Cardiac septum (tissue), 1 donor: ENCODE measurements at regions of chr19 and their contacts with region 1.

Region 1: DNA sequence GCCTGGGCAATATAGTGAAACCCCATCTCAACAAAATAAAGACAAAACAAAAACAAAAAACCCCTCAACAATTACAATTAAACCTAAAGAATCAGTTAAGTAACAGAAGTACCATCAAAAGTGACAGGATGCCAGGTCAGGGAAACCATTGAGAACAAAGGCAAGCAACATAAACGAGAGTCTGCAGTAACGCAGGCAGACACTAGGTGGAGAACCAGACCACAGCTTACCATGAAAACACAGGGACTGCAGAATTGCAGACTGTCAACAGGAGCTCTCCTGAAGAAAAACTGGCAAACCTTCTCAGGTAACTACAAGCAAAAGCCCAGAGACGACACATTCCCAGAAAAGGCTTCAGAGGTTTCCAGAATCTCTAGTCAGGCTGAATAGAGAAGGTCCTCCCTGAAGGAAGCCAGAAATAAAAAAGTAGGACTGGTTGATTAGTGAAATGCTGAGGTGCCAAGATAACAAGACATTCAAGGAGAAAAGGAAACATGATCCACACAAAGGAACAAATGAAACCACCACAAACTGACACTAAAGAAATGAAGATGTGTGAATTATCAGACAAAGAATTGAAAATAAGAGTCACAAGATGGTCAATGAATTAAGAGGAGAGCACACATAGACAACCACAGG is 2.2 kb upstream of the ZNF665 start:
- DNase-seq: no peak

Region 2: DNA sequence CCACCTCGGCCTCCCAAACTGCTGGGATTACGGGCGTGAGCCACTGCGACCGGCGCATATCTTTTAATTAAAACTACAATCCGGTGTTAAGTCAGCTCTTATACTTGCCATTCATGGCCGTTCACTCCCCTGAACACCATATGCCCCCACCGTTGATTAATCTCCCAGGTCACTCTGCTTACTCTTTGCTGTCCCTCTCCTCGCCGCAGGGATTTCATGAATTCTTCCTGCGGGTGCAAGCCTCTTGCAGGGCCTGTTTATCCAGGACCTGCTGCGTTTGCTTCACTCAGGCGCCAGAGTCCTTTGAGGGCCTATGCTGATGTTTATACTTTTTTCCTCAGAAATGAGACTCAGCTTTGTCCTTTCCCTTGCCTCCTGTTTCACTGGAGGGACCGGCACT is 149.8 kb before region 1 on chr19:
- intact Hi-C with region 1: no loop called
- DNase-seq: no peak

Region 3: DNA sequence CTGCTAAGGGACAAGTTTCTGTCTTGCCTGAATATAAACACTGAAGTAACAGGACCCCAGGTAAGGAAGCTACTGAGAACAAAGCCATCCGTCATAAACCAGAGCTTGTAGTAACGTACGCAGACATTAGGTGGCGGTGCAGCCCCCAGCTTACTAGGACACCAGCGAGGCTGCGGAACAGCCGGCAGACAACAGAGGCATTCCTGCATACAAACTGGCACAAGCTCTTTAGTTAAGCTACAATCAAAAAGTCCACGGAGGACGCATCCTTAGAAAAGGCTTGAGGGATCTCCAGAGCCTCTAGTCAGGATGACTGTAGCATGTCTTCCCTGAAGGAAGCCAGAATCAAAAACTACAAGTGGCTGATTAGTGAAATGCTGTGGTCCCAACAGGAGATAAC is 118.4 kb before region 1 on chr19:
- intact Hi-C with region 1: loop called (anchors 5 kb)
- DNase-seq: no peak

Region 4: DNA sequence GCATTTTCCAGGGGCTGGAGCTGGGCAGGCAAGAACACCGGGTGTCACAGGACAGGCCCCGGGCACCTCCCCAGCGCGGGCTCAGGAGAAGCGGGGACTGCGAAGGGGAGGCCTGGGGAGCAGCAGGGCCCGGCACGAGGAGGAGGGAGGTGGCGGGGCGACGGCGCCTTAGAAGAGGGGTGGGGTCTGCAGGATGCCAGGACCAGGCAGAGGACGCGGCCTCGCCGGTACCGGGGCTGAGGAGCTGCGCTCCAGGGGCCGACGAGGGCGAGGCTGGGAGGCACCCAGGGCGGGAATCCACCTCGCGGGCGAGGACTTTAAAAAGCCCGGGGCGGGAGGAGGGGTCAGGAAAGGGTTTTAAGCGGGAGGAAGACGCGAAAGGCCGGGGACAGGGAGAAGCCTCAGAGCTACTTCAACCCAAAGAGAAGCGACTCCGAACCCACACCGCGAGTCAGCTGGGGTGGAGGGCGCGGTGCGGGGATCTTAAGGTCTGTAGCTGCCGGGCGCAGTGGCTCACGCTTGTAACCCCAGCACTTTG is 37.2 kb before region 1 on chr19:
- intact Hi-C with region 1: no loop called
- DNase-seq: no peak

Region 5: GRCh38 chr19:53254411-53255341 is 59.3 kb after region 1 on chr19 and contains the start of gene ZNF677:
- intact Hi-C with region 1: loop called (anchors 5 kb)
- DNase-seq: peak; percentile 95
- total RNA-seq, gene ZNF677: 20.2 TPM

Region 6: DNA sequence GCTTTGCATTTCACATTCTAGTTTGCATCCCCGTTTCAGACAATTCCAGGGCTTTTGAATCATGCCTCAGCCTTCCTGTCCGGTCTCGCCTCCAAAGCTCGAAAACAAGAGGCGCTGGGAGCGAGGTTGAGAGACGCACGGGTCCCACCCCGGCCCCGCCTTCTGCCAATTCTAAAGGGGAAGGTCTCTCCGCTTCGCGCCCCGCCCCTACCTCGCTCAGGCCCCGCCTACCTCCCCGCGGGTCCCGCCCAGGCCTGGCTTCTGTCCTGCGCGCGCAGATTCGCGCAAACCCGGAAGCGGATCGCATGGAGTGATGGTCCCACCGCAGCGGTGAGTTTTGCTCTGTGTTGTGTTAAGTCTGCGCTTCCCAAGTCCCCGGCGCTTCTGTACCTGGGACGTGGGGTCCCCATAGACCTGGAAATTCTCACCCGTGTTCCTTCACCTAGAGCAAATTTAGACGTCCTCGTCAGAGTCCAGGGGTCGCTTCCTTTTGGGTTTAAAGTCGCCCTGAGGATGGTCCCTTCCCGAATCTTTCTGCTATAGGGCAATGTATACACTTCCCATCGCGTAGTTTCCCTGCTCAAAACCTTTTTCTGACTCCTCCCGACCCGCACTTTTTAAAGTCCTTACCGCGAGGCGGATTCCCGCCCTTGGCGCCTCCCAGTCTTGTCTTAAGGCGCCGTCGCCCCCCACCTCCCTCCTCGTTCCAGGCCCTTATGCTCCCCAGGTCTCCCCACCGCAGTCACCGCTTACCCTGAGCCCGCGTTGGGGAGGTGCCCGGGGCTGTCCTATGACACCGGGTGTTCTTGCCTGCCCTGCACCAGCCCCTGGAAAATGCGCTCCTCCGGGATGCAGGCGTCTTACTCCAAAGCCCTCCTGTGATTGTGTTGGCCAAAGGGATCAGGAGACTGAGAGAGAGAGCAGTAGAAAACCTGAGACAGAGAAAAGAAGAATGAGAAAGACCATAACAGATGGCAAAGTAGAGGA is 138.4 kb after region 1 on chr19 and contains the start of gene ZNF845:
- intact Hi-C with region 1: loop called (anchors 10 kb)
- DNase-seq: peak; percentile 98
- total RNA-seq, gene ZNF845: 3.2 TPM

Region 7: GRCh38 chr19:53365134-53365898 is 169.9 kb after region 1 on chr19 and contains the start of gene ZNF525:
- intact Hi-C with region 1: loop called (anchors 5 kb)
- DNase-seq: peak; percentile 95
- total RNA-seq, gene ZNF525: 4.4 TPM

Region 8: GRCh38 chr19:53467485-53468262 is 272.3 kb after region 1 on chr19 and contains the start of gene ZNF813:
- intact Hi-C with region 1: loop called (anchors 10 kb)
- DNase-seq: peak; percentile 97
- total RNA-seq, gene ZNF813: 0.75 TPM

Region 9: DNA sequence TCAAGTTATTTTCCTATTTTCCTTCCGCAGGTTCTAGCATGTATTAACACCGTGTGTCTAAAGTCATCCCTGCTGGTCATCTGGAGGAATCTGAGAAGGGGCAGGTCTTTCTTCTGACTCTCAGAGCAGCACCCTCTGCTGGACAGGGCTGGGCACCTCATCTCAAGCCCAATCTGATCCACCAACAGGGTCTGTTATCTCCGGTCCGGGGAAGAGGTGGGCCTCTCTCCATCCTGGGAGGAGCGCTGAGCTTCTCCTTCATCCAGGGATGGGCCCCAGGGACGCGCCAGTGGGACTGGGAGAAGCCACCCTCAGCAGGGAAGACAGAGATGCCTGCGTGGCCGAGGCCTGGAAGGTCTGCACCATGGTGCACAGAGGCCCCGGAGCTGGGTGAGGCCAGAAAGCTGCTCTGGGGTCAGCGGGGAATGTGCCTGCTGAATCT is 316.6 kb after region 1 on chr19:
- intact Hi-C with region 1: loop called (anchors 5 kb)
- DNase-seq: no peak